ENCODE measurements at regions of chr9 and their contacts with region 1.

Region 1: GRCh38 chr9:16309469-16310271 is 560.8 kb downstream of the BNC2 start:
- DNase-seq: no peak

Region 2: DNA sequence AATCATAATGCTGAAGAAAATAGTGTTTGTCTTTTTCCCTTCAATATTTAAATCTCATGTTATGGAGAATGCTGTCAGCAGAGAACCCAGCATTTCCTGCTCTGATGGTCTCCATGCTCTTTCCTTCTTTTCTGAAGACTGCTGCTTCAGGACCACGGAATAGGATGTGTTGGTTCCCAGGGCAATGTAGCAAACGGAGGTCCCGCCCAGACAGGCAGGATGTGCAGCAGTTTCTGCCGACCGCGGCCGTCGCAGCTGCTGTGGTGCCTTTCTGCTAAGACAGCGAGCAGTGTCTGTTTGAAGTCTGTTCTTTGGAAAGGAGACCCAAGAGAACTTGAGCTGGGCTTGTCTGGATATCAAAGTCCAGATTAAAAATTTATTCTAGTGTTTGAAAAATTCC is 102.5 kb before region 1 on chr9:
- intact Hi-C with region 1: loop called in 1 of 2 experiments (anchors 10 kb)
- DNase-seq: no peak